ENCODE measurements at regions of chr19 and their contacts with region 1.

Region 1: DNA sequence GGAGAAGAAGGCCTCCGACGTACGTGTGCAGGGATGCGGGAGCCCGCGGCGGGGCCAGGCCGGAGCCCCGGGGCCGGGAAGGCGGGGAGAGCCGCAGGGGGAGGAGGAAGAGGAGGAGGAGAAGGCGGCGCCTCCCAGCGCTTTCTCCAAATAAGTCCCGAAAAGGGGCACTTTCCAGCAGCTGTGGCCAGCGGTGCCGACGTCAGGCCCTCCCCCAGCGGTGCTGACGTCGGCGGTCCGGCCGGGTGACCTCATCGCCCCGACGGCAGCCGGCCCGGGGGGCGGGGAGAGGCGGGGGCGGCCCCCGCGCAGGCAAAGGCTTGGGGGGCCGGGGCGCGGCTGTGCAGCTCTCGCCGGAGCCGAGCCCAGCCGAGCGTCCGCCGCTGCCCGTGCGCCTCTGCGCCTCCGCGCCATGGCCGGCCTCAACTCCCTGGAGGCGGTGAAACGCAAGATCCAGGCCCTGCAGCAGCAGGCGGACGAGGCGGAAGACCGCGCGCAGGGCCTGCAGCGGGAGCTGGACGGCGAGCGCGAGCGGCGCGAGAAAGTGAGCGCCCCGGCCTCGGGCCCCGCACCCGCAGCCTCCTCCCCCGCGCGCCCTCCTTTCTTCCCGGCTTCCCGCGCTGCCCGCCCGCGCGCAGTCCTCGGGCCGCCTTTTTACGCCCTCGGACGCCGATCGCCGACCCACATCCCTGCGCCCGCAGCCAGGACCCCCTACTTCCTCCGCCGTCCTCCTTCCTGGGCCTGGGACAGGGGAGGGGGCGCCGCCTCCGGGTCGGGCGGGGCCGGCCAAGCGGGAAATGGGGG is at the start of gene TPM4:
- DNase-seq: peak; percentile 88
- H3K4me3 Mint-ChIP-seq: peak within 1 kb of the TSS; percentile 88
- H3K27ac Mint-ChIP-seq: peak within 1 kb of the TSS; percentile 98
- H3K4me1 Mint-ChIP-seq: peaks cover 70% of the 10 kb centered on the region
- H3K27me3 Mint-ChIP-seq: no peaks in the 10 kb centered on the region
- total RNA-seq, gene TPM4: 346 and 351 TPM in 2 replicates

Region 2: DNA sequence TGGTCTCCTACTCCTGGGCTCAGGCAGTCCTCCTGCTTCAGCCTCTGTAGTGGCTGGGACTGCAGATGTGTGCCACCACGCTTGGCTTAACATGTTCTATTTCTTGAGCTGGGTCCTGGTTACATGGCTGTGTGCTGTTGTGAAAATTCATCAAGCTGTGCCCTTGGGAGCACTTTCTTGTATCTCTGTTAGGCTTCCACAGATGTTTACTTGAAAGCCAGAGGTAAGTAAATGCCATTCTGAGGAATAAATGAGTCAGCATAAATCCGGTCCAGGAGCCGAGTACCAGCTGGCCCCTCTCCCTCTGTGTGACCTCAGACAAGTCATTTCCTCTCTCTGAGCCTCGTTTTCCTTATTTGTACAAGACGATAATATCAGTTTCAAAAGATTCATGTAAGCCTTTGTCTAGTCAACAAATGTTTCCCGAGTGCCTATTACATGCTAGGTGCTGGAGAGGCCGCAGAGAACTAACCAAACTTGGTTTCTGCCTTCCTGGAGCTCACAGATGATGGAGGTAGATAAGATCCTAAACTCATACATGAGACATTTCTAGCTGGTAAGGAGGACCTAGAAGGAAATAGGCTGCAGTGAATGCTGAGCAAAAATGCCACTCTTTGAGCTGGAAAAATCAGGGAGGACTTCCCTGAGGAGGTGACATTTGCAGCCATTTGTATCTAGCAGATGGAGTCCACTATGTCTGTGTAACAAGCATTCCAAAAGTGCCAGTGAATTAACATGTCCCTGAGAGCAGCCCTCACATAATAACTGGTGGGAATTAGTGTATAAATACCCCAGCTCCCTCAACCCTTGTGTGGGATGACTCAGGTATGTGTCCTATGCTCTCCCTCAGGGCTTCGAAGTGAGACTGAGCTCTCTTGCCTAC is 609.3 kb before region 1 on chr19:
- intact Hi-C with region 1: loop called (anchors 10 kb)
- DNase-seq: peak; percentile 68
- H3K4me3 Mint-ChIP-seq: peak overlapping the region; percentile 65
- H3K27ac Mint-ChIP-seq: peak overlapping the region; percentile 97
- H3K4me1 Mint-ChIP-seq: peaks cover 68% of the 10 kb centered on the region
- H3K27me3 Mint-ChIP-seq: peaks cover 3% of the 10 kb centered on the region

Region 3: GRCh38 chr19:16088351-16089009 is 12.1 kb after region 1 on chr19:
- intact Hi-C with region 1: loop called (anchors 1 kb)
- DNase-seq: no peak
- H3K4me3 Mint-ChIP-seq: no peak overlapping the region
- H3K27ac Mint-ChIP-seq: no peak overlapping the region
- H3K4me1 Mint-ChIP-seq: peaks cover 62% of the 10 kb centered on the region
- H3K27me3 Mint-ChIP-seq: no peaks in the 10 kb centered on the region

Region 4: DNA sequence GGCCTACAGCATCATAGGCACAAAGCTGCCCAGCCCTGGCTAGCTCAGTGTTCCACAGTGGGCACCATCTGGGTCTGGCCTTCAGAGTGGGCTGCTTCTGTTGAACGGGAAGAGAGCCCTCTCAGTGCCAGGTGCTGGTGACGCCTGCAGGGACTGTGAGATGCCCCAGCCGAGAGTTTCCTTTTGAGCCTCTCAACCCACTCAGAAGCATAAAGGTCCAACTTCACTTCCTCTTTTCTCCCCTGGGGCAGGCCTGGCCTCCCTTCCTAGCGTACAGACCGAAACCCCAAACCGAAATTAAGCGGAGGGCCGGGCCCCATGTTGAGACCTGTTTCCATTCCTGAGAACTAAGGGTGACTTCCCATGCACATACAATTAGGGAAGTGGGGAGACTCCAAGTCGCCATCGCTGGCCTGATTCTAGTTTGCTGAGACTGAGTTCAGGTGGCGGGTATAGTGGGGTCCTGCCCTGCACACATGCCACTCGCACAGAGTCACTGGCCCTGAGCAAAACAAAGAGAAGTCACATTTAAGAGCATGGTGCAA is 42.2 kb after region 1 on chr19:
- intact Hi-C with region 1: loop called (anchors 1 kb)
- DNase-seq: peak; percentile 41
- H3K4me3 Mint-ChIP-seq: peak overlapping the region; percentile 70
- H3K27ac Mint-ChIP-seq: peak overlapping the region; percentile 95
- H3K4me1 Mint-ChIP-seq: peaks cover 51% of the 10 kb centered on the region
- H3K27me3 Mint-ChIP-seq: peaks cover 1% of the 10 kb centered on the region

Region 5: DNA sequence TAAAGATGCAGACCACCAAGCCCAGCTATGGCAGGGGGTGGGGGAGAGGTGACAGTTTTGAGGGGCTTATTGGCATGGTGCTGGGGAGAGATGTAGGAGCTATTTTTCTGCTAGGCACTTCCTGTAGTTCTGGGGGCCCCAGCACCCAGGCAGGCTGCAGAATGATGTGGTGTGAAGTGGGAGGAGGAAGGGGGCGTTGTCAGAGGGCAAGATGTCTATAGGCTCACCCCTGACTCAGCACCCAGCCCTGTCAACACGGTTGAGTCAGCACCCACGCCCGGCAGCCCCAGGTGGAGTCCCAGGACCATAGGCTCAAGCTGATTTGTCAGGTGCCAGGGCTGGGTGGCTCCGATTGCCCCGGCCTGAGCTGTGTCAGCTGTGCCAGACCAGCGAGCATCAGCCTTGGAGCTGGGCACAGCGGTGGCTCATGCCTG is 254.0 kb after region 1 on chr19:
- intact Hi-C with region 1: loop called (anchors 2 kb)
- DNase-seq: peak; percentile 89
- H3K4me3 Mint-ChIP-seq: peak overlapping the region; percentile 93
- H3K27ac Mint-ChIP-seq: peak overlapping the region; percentile 79
- H3K4me1 Mint-ChIP-seq: peaks cover 67% of the 10 kb centered on the region
- H3K27me3 Mint-ChIP-seq: peaks cover 9% of the 10 kb centered on the region